ENCODE measurements at regions of chr7 and their contacts with region 1.

Region 1: GRCh38 chr7:40644454-40645188 is 509.8 kb downstream of the SUGCT start:
- DNase-seq: no peak

Region 2: GRCh38 chr7:39971924-39972323 is 672.7 kb before region 1 on chr7:
- in situ Hi-C with region 1: no loop called
- DNase-seq: no peak

Region 3: GRCh38 chr7:40329601-40330153 is 314.9 kb before region 1 on chr7:
- in situ Hi-C with region 1: loop called (anchors 25 kb)
- DNase-seq: peak; percentile 53

Region 4: GRCh38 chr7:41175435-41175834 is 530.8 kb after region 1 on chr7:
- in situ Hi-C with region 1: no loop called
- DNase-seq: no peak